Activated CD4-positive, alpha-beta T cell treated with anti-CD3 and anti-CD28 coated beads, Interleukin-2, amount 10 ng/mL, durations not matched to agents 24 days and 14 days (primary cell): ENCODE measurements at regions of chr5 and their contacts with region 1.

Region 1: GRCh38 chr5:157219491-157220271 is 39.0 kb downstream of the ITK start:
- DNase-seq: peak; percentile 80
- H3K4me3 Mint-ChIP-seq: peak overlapping the region; percentile 78
- H3K27ac Mint-ChIP-seq: peak overlapping the region; percentile 93
- H3K4me1 Mint-ChIP-seq: peaks cover 76% of the 10 kb centered on the region
- H3K27me3 Mint-ChIP-seq: no peaks in the 10 kb centered on the region

Region 2: DNA sequence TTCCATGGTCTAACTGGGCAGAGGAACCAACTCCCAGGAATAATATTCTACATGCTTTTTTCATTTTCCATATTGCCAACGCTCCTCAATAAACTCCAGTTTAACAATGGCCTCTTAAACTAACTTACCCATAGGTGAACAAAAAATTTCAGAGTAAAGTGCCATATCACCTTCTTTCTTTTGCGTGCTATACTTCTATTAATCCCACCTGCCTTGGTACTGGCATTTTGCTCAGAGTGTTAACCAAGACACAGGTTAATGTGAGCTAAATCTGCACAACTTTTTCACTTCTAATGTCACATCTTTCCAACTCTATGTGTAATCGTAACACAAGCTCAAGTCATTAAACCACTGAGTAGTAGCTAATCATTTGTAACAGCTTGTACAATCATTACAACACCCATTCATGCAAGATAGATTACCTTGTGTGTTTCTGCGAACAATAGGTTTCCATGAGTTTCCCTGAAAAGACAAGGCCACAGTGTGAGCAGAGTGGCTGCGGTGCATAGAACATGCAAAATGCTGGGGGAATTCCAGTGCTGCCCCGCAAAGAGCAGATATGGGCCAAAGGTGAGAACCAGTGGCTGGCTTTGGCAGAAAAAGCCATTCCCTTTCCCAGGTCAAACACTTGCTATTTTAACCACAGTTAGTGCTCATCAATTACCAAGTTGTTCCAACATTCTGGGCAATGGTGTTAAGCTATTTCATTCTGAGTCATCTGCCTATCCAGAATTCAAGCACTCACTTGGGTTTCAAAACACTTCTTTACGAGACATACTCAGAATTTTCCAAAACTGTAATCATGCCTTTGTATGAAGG is 299.4 kb before region 1 on chr5:
- intact Hi-C with region 1: loop called (anchors 2 kb)
- DNase-seq: peak; percentile 90
- H3K4me3 Mint-ChIP-seq: peak overlapping the region; percentile 87
- H3K27ac Mint-ChIP-seq: peak overlapping the region; percentile 96
- H3K4me1 Mint-ChIP-seq: peaks cover 61% of the 10 kb centered on the region
- H3K27me3 Mint-ChIP-seq: no peaks in the 10 kb centered on the region

Region 3: DNA sequence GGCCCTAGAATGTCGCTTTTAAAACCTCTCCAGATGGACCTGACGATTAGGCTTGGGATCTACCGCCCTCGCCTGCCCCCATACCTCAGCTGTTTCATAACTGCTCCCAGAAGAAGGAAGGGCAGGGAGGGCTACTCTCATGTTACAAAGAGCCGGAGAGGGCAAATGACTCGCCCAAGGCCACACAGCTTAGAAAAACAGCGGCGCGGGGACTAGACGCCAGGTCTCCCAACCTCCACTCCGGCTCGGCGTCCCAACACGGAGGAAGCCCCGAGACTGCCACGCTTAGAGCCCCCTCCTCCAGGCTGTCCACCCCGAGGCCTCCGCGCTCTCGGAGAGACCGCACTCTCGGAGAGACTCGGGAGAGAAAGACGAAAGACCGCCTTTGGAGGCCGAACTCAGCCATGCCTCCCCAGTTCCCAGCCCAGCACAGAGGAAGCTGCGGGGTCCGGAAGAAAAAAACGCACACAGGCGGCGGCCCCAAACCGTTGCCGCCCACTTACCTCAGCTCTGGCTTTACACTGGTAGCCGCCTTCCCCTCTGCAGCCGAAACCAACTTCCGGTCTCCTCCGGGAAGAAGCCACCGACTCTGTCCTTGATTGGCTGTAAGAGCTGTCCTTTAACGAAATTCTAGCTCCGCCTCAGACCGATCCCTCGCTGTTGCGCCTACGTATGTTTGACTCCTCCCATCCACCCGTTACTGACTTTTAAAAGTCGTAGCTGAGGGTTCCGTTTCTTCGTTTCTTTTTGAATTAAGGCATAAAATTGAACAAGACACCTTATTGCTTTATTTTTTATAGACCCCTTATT is 77.2 kb before region 1 on chr5 and contains the start of gene MED7:
- intact Hi-C with region 1: loop called (anchors 2 kb)
- DNase-seq: peak; percentile 98
- H3K4me3 Mint-ChIP-seq: peak within 1 kb of the TSS; percentile 95
- H3K27ac Mint-ChIP-seq: peak within 1 kb of the TSS; percentile 99
- H3K4me1 Mint-ChIP-seq: peaks cover 45% of the 10 kb centered on the region
- H3K27me3 Mint-ChIP-seq: no peaks in the 10 kb centered on the region
- total RNA-seq, gene MED7: 13.2 and 14.6 TPM in 2 replicates

Region 4: GRCh38 chr5:157167214-157167621 is 52.5 kb before region 1 on chr5:
- intact Hi-C with region 1: loop called (anchors 1 kb)
- DNase-seq: peak; percentile 78
- H3K4me3 Mint-ChIP-seq: peak overlapping the region; percentile 75
- H3K27ac Mint-ChIP-seq: peak overlapping the region; percentile 91
- H3K4me1 Mint-ChIP-seq: peaks cover 80% of the 10 kb centered on the region
- H3K27me3 Mint-ChIP-seq: no peaks in the 10 kb centered on the region

Region 5: DNA sequence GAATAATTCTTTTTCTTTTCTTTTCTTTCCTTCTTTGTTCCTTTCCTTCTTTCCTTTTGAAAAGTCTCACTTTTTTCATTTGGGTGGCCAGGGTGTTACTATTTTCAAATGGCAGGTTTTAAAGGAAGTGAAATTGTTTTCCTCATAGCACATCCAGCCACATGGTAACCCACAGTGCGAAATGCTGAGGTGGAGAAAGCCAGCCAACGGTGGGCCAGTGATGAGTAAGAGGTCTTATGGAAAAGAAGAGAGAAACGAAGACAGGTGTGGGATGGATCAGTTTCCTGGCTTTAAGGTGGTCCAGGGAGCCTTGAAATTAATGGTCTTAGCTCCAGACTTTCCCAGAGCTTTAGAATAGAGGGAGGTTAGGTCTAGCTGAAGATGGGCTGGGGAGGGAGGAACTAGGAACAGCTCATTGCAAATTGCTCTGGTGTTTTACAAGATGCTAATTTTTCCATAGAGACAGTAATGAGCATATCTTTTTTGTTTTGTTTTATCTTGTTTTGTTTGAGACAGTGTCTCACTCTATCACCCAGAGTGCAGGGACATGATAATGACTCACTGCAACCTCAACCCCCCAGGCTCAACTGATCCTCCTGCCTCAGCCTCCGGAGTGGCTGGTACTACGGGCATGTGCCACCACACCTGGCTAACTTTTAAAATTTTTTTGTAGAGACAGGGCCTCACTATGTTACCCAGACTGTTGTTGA is 21.2 kb before region 1 on chr5:
- intact Hi-C with region 1: loop called (anchors 1 kb)
- DNase-seq: peak; percentile 82
- H3K4me3 Mint-ChIP-seq: peak overlapping the region; percentile 69
- H3K27ac Mint-ChIP-seq: peak overlapping the region; percentile 96
- H3K4me1 Mint-ChIP-seq: peaks cover 80% of the 10 kb centered on the region
- H3K27me3 Mint-ChIP-seq: no peaks in the 10 kb centered on the region

Region 6: DNA sequence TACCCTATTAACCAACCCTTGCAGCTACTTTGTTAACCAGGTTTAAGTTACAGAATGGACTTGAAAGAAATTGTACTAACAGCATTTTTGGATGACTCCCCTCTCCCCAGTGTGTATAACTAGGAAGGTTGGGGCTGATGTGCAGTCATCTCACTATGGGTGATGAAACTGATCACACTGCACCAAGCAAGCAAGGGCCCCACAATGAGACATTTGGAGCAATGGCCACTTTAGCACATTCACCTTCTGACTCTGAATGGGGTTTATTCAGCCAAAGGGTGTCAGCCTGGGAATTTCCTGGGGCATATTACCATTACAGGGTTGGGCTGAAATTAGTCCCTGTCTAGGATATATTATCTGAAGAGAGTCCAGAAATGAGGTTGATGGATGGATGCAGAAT is 27.6 kb after region 1 on chr5:
- intact Hi-C with region 1: loop called (anchors 1 kb)
- DNase-seq: no peak
- H3K4me3 Mint-ChIP-seq: peak overlapping the region; percentile 66
- H3K27ac Mint-ChIP-seq: peak overlapping the region; percentile 82
- H3K4me1 Mint-ChIP-seq: peaks cover 78% of the 10 kb centered on the region
- H3K27me3 Mint-ChIP-seq: no peaks in the 10 kb centered on the region

Region 7: DNA sequence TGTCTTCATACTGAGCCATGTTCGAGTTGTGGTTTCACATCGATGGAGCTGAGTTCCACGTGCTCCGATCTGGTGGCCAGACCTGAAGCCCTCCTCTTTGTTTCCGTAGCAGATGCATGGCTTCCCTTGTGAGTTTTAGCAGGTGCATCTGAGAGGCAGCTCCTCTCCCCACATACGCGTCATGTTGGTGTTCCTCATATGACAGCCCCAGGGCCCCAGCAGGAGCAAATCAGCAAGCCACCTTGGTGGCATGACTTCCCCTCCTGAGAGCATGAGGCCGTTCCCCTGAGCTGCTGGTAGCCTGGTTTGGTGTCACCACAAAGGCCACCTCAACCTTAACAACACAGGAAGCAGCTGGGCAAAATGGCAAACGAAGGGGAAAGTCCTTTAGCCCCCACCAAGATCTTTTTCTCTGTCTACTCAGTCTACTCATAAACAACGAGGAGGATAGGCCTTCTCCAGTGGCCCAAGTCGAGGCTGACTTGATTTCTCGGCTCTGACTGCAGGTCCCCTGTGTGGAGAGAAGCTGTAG is 52.1 kb after region 1 on chr5:
- intact Hi-C with region 1: loop called (anchors 1 kb)
- DNase-seq: peak; percentile 95
- H3K4me3 Mint-ChIP-seq: peak overlapping the region; percentile 96
- H3K27ac Mint-ChIP-seq: peak overlapping the region; percentile 99
- H3K4me1 Mint-ChIP-seq: peaks cover 81% of the 10 kb centered on the region
- H3K27me3 Mint-ChIP-seq: no peaks in the 10 kb centered on the region